Motor neuron (in vitro differentiated cells): ENCODE measurements at regions of chr2 and their contacts with region 1.

Region 1: DNA sequence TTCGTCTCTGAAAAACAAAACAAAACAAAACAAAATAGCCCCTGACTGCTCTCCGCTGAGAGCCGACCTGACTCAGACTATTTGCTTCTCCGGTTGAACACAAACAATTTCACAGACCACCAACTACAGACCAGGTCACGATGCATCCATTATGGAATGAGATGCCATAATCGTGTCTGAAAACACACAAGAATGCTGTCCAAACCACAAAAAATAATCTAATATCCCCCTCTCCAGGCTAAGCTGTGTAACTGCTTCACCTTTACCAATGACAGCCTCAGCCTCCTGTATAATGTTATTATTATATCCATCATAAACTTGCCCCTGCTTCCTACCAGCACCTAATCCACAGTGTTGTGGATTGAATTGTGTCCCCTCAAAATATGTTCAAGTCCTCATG is 114.7 kb downstream of the DNAH6 start:
- ATAC-seq: peak in 5 of 8 experiments; percentile 51 to 84 (median 78)
- H3K4me3 ChIP-seq: no peak overlapping the region
- H3K27ac ChIP-seq: no peak overlapping the region
- H3K4me1 ChIP-seq: no peaks in the 10 kb centered on the region

Region 2: DNA sequence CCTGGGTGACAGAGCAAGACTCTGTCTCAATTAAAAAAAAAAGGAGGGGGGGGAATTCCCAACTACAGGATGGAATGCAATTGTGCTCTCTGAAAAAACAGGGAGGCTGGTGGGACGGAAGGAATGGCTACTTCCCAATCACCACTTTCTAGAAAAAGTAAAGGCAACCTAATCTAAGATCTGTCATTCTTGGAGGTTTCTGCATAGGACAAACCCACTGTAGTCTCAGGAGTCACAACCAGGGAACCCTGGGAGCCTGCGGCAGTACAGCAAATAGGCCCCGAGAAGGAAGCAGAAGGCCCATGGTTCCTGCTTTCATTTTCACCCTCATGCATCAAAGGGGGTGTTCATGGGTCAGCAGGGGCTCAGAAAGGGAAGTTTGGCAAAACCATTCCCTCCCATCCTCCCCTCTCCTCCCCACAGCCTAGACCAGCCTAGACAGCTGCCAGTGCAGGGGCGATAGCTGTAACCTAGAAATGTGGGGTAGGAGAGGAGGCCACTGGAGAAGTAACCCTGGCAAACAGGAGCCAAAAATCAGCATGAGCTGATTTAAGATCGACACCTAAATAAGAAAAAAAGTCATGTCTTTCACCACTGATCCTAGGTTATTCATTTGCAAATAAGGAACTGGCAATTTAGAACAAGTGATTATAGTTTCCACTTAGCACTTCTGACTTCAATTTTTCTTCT is 201.9 kb after region 1 on chr2:
- in situ Hi-C with region 1: loop called in 1 of 9 experiments (anchors 25 kb)
- ATAC-seq: peak in 3 of 8 experiments; percentile 38 to 42 (median 39)
- H3K4me3 ChIP-seq: no peak overlapping the region
- H3K27ac ChIP-seq: peak overlapping the region in 1 of 2 donors; percentile 50
- H3K4me1 ChIP-seq: peaks cover 5 to 7% of the 10 kb centered on the region in 2 donors